H1 (cell line): ENCODE measurements at regions of chr20 and their contacts with region 1.

Region 1: DNA sequence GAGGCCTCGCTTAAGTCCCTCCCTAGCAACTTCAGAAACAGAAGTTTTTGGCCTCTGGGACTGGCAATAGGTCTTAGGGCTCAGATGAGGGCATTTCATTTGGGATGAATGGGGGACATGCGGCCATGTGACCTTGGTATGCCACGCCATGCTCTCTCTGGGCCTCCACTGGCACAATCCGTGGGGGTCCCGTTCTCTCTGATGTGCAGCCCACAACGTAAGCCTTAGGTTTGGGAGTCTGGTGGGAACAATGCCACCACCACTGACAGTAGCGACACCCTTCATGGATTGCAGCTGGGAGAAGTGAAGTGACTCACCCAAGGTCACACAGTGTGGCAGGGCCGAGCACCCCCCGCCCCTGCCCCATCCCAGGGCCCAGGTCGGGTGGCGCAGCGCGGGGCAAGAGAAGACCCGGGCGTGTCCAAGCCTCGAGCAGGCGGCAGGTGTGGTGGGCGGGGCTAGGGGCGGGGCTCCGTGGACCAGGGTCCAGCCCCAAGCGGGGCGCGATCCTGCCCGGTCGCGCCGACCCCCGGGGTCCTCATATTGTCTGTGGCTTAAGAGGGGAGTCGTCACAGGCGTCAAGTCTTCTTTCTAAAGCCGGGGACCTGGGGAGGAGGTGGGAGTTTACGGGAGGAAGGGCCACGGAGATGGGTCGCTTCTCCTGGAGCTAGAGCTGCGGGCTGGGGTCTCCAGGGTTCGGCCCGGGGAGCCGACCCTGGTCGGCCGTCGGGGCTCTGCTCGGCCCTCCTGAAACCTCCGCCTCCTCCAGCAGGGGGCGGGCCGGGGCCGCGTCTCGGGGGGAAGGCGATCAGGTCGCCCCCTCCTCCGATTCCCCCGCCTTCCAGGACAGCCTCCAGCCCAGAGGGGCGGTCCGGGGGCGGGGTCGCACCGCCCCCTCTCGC is 698 bp upstream of the CEBPB start:
- DNase-seq: peak in 1 of 2 experiments; percentile 98
- H3K4me3 ChIP-seq: peak overlapping the region; percentile 44 to 95 (median 68)
- H3K27ac ChIP-seq: no peak overlapping the region
- H3K4me1 ChIP-seq: peaks cover 0 to 34% (median 20%) of the 10 kb centered on the region in 4 experiments; a peak in 6 of 7 replicates
- H3K27me3 ChIP-seq: peaks cover 0 to 2% (median 0%) of the 10 kb centered on the region in 4 experiments; a peak in 1 of 7 replicates
- CTCF ChIP-seq: peak; percentile 66 to 82 (median 73)
- EP300 ChIP-seq: no peak; a peak in 1 of 3 replicates
- POLR2A ChIP-seq: no peak
- RAD21 ChIP-seq: peak; percentile 83 to 86

Region 2: DNA sequence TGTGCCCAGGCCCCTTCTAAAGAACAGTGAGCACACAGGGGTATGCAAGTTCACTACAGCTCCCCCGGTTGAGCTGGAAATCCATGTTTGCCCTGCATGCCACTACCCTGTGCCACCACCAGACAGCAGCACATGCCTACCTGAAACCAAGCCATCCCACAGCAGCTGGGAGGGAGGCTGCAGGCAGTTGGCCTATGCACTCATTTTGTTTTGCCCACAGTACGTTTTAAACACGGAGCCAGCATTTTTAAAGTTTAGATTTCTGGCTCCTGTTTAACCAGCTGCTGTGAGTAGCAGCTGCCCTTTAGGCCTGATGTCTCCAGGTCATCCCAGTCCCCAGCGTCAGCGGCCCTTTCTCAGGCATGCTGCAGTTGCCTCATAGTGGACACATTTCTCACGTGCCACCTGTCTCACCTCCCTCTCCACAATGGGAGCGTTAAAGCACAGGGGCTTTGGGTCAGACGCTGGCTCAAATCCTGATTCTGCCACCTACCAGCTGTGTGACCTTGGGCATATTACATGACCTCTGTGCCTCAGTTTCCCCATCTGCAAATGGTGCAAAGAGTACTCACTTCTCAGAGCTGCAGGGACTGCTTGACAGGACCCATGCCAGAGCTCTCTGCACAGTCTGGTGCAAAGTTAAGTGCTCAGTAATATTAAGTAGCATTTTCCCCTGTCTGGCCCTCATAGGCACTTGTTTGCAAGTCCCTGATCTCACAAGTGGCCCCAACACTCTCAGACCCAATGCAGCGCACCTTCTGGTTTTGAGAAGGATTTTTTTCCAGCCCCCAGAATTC is 68.8 kb before region 1 on chr20:
- CTCF ChIA-PET with region 1: interaction called, 11 read pairs
- POLR2A ChIA-PET with region 1: interaction called, 4 read pairs
- DNase-seq: peak; percentile 56 to 66
- H3K4me3 ChIP-seq: no peak overlapping the region
- H3K27ac ChIP-seq: no peak overlapping the region
- H3K4me1 ChIP-seq: peaks cover 0 to 5% (median 1%) of the 10 kb centered on the region in 4 experiments; a peak in 3 of 7 replicates
- H3K27me3 ChIP-seq: no peaks in the 10 kb centered on the region
- CTCF ChIP-seq: peak; percentile 96 to 100 (median 97)
- EP300 ChIP-seq: no peak
- POLR2A ChIP-seq: no peak
- RAD21 ChIP-seq: peak; percentile 95 to 98

Region 3: DNA sequence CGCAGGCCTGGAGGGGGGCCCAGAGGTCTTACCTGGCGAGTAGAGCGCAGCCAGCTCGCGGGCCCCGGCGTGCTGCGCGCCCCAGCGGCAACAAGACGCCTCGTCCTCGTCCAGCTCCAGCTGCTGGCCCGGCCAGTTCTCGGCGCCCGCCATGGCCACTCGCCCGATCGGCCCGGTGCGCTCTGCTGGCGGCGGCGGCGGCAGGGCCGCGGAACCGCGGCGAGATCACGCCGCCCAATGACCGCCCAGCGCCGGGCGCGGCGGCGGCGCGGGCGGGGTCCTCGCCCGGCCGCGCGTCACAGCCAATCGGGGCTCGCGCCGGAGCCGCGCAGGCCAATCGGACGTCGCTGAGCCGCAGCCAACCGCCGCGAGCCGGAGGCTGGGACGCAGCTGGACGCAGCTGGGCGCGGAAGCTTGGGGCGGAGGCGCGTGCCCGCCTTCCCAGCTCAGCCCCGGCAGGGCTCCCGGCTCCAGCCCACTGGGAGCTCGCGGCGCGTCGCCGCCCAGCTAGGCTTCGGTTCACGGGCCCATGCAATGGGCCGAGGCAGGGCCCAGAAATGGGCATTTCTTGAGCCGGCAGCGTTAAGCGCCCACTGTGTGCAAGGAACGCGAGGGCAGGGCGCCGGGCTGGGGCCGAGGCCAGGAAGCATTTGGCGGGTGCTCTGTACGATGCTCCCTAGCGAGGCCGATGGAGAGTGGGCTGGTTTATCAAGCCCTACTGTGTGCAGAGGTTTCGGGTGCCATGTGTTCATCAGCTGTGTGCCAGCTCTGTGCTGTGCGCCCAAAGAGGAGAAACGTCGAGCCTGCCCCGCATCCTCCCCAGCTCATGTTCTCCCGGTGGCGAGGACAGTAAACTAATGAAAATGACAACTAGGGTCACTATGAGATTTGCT is 36.2 kb before region 1 on chr20 and contains the start of gene PEDS1:
- CTCF ChIA-PET with region 1: no interaction called
- POLR2A ChIA-PET with region 1: interaction called, 10 read pairs
- DNase-seq: peak in 1 of 2 experiments; percentile 87
- H3K4me3 ChIP-seq: peak within 1 kb of the TSS; percentile 61 to 98 (median 86)
- H3K27ac ChIP-seq: peak within 1 kb of the TSS; percentile 26; the same call in 1 of the 2 replicates
- H3K4me1 ChIP-seq: peaks cover 9 to 27% (median 16%) of the 10 kb centered on the region in 4 experiments
- H3K27me3 ChIP-seq: peaks cover 0 to 3% (median under 1%) of the 10 kb centered on the region in 4 experiments; a peak in 2 of 7 replicates
- CTCF ChIP-seq: no peak
- EP300 ChIP-seq: no peak
- POLR2A ChIP-seq: peak; percentile 70 to 75
- RAD21 ChIP-seq: no peak
- total RNA-seq, gene PEDS1: 28.9 and 33.3 TPM in 2 replicates

Region 4: DNA sequence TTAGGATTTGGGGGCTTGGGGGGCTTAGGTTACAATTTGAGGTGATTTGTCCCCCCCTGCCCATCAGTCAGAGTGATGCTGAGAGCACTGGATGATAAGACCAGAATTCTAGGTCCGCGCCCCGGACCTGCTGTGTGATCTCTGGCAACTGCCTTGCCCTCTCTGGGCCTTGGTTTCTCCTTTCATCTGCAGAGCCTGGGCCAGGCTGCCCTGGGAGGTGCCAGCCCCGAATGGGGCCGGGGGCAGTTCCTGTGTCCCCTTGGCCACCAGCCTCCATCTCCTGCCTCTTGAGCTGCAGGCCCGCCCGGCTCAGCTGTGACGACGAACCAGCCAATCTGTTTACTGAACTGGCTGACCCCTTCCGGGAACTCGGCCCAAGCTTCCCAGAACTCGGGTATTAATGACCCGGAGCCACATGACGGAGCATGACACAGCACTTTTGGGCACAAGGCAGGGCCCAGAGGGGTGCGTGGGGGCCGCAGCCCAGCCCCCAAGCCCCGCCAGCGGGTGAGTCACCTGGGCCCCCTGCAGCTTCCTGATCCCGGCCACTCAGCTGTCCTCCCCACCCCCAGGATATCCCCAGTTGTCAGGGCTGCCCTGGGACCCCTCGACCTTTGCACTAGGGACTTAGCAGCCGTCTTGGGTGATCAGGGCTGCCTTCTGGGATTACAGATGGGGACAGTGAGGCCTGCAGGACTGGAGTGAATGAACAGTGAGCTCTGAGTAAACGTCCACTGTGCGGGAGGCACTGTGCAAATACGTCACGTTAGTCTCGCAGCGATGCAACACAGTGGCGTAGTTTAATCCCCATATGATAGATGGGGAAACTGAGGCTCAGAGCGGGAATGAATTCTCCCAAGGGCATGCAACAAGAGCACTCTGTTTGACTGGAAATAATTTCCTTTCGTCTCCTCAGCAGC is 102.7 kb after region 1 on chr20:
- CTCF ChIA-PET with region 1: interaction called, 4 read pairs
- POLR2A ChIA-PET with region 1: interaction called, 10 read pairs
- DNase-seq: no peak
- H3K4me3 ChIP-seq: no peak overlapping the region
- H3K27ac ChIP-seq: no peak overlapping the region
- H3K4me1 ChIP-seq: peaks cover 0 to 4% (median 0%) of the 10 kb centered on the region in 4 experiments; a peak in 4 of 7 replicates
- H3K27me3 ChIP-seq: no peaks in the 10 kb centered on the region
- CTCF ChIP-seq: no peak
- EP300 ChIP-seq: no peak
- POLR2A ChIP-seq: no peak
- RAD21 ChIP-seq: no peak

Region 5: DNA sequence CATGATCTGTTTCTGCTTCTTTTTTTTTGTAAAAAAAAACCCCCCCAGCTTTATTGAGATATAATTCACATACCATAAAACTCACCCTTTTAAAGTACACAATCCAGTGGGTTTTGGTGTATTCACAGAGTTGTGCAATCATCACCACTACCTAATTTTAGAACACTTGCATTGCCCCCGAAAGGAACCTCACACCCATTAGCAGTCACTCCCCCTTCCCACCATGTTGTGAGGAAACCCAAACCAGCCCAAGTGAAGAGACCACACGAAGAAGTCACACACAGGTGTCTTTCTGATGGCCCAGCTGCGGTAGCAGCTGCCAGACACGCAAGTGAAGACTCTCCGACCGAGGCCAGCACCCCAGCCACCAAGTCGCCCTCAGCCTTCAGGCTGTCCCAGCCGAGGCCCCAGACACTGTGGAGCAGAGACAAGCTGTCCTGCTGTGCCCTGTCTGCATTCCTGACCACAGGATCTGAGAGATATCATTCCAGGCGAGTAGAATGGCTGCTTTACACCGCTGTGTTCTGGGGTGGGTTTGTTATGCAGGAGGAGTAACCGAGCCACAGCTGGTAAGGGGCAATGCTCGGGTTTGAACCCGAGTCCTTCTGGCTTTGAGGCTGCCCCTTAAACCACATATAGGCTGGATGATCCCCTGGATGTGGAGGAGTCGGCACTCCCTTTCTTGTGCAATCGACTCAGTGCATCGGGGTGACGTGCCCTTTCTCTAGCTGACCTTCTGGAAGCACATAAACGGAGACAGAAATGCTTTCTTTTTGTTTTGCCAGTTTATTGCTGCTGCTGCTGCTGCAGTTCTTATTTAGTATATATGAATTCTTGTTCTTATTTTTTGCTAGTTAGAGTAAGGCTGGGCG is 261.2 kb after region 1 on chr20:
- CTCF ChIA-PET with region 1: interaction called, 12 read pairs
- POLR2A ChIA-PET with region 1: interaction called, 4 read pairs
- DNase-seq: peak in 1 of 2 experiments; percentile 62
- H3K4me3 ChIP-seq: no peak overlapping the region; a peak in 1 of 8 replicates
- H3K27ac ChIP-seq: no peak overlapping the region
- H3K4me1 ChIP-seq: peaks cover 0 to 5% (median 3%) of the 10 kb centered on the region in 4 experiments; a peak in 4 of 7 replicates
- H3K27me3 ChIP-seq: no peaks in the 10 kb centered on the region
- CTCF ChIP-seq: no peak
- EP300 ChIP-seq: 0 out of 3 replicates have a peak, but pooled peaks of 1 of the 2 experiments have one; percentile 22
- POLR2A ChIP-seq: no peak
- RAD21 ChIP-seq: no peak; a peak in 1 of 4 replicates

Region 6: GRCh38 chr20:50460460-50461267 is 270.7 kb after region 1 on chr20:
- CTCF ChIA-PET with region 1: interaction called, 115 read pairs
- POLR2A ChIA-PET with region 1: interaction called, 15 read pairs
- DNase-seq: peak in 1 of 2 experiments; percentile 99
- H3K4me3 ChIP-seq: no peak overlapping the region
- H3K27ac ChIP-seq: no peak overlapping the region
- H3K4me1 ChIP-seq: peaks cover 0 to 8% (median 2%) of the 10 kb centered on the region in 4 experiments; a peak in 5 of 7 replicates
- H3K27me3 ChIP-seq: no peaks in the 10 kb centered on the region
- CTCF ChIP-seq: peak; percentile 92 to 95 (median 93)
- EP300 ChIP-seq: no peak
- POLR2A ChIP-seq: no peak
- RAD21 ChIP-seq: peak; percentile 91